Transverse colon (tissue), 4 donors: ENCODE measurements at regions of chr3 and their contacts with region 1.

Region 1: GRCh38 chr3:194583604-194584318 is 49.5 kb downstream of the TMEM44 start:
- DNase-seq: peak; percentile 95
- H3K4me3 ChIP-seq: peak overlapping the region; percentile 77 to 83 (median 81)
- H3K27ac ChIP-seq: peak overlapping the region; percentile 90 to 94 (median 93)
- H3K4me1 ChIP-seq: peaks cover 4 to 15% (median 9%) of the 10 kb centered on the region in 4 donors
- H3K27me3 ChIP-seq: no peaks in the 10 kb centered on the region
- CTCF ChIP-seq: peak in 1 of 5 experiments; percentile 23
- EP300 ChIP-seq: no peak
- POLR2A ChIP-seq: peak; percentile 96

Region 2: GRCh38 chr3:194472290-194472920 is 111.4 kb before region 1 on chr3:
- in situ Hi-C with region 1: loop called in 2 of 4 experiments (anchors 5 to 10 kb)
- intact Hi-C with region 1: no loop called
- DNase-seq: no peak
- H3K4me3 ChIP-seq: no peak overlapping the region
- H3K27ac ChIP-seq: no peak overlapping the region
- H3K4me1 ChIP-seq: peaks cover 0 to 23% (median 6%) of the 10 kb centered on the region in 4 donors
- H3K27me3 ChIP-seq: no peaks in the 10 kb centered on the region
- CTCF ChIP-seq: peak; percentile 93 to 97 (median 96)
- EP300 ChIP-seq: no peak
- POLR2A ChIP-seq: no peak

Region 3: DNA sequence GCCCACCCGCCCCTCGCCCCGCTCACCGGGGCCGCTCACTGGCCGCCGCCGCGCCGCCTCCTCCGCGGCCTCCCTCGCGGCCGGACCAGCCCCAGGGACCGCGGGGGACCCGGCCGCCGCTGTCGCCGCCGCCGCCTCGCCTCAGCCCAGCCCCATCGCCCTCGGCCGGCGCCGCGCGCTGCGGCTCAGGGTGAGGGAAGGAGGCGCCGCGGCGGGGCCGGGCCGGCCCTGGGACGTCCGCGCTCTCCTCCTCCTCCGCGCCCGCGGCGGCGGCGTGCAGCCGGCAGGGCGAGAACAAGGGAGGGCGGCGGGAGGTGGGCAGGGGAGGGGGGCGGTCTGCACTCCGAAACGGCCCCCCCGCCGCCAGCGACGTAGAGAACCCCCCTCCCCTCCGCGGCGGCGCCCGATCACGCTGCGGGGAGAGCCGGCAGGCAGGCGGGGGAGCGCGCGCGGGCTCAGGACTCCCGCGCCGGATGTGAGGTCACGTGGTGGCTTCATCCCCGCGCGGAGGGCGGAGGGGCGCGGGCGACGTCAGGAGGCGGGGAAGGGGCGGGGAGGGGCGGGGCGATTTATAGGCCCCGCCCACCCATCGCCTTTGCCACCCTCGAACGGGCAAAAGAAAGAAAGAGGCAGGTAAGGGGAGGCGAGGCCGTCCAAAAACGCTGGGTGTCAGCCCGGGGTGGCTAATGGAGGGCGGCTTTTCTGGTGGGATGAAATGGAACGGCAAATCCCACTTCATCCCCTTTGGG is 97.0 kb before region 1 on chr3 and contains the start of gene ATP13A3:
- in situ Hi-C with region 1: loop called in 1 of 4 experiments (anchors 10 kb)
- intact Hi-C with region 1: loop called (anchors 5 kb)
- DNase-seq: peak; percentile 92
- H3K4me3 ChIP-seq: peak within 1 kb of the TSS; percentile 63 to 72 (median 69)
- H3K27ac ChIP-seq: peak within 1 kb of the TSS; percentile 85 to 96 (median 90)
- H3K4me1 ChIP-seq: peaks cover 11 to 33% (median 27%) of the 10 kb centered on the region in 4 donors
- H3K27me3 ChIP-seq: no peaks in the 10 kb centered on the region
- CTCF ChIP-seq: no peak
- EP300 ChIP-seq: no peak
- POLR2A ChIP-seq: peak; percentile 87
- total RNA-seq, gene ATP13A3: 23.6 to 129 (median 69.8) TPM

Region 4: GRCh38 chr3:194671900-194672808 is 88.4 kb after region 1 on chr3 and contains the start of gene LSG1:
- in situ Hi-C with region 1: no loop called
- intact Hi-C with region 1: loop called (anchors 2 kb)
- DNase-seq: peak; percentile 94
- H3K4me3 ChIP-seq: peak within 1 kb of the TSS; percentile 62 to 87 (median 69)
- H3K27ac ChIP-seq: peak within 1 kb of the TSS; percentile 84 to 92 (median 90)
- H3K4me1 ChIP-seq: peaks cover 13 to 23% (median 14%) of the 10 kb centered on the region in 4 donors
- H3K27me3 ChIP-seq: peaks cover 3% of the 10 kb centered on the region
- CTCF ChIP-seq: no peak
- EP300 ChIP-seq: no peak
- POLR2A ChIP-seq: peak; percentile 51
- total RNA-seq, gene LSG1: 18.7 to 69.9 (median 52.8) TPM